Mammary epithelial cell (primary cell): ENCODE measurements at regions of chr3 and their contacts with region 1.

Region 1: GRCh38 chr3:100590114-100590839 is 19.1 kb upstream of the ADGRG7 start:
- DNase-seq: peak; percentile 59
- H3K4me3 ChIP-seq: no peak overlapping the region
- H3K27ac ChIP-seq: peak overlapping the region; percentile 2
- H3K4me1 ChIP-seq: no peaks in the 10 kb centered on the region
- H3K27me3 ChIP-seq: no peaks in the 10 kb centered on the region
- CTCF ChIP-seq: peak; percentile 85 to 86

Region 2: DNA sequence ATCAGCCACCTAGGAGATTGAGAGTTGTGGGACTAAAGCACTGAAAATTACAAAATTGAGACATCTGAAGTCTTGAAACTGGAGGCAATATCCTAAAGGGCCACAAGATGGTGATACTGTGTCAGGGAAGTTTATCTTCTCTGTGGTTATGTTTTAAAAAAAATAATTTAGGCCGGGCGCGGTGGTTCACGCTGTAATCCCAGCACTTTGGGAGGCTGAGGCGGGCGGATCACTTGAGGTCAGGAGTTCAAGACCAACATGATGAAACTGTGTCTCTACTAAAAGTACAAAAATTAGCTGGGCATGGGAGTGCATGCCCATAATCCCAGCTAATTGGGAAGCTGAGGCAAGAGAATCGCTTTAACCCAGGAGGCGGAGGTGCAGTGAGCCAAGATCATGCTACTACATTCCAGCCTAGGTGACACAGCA is 273.6 kb before region 1 on chr3:
- CTCF ChIA-PET with region 1: no interaction called
- dilution Hi-C with region 1: no loop called
- in situ Hi-C with region 1: no loop called
- intact Hi-C with region 1: loop called (anchors 1 kb)
- DNase-seq: peak; percentile 45
- H3K4me3 ChIP-seq: no peak overlapping the region
- H3K27ac ChIP-seq: no peak overlapping the region
- H3K4me1 ChIP-seq: no peaks in the 10 kb centered on the region
- H3K27me3 ChIP-seq: no peaks in the 10 kb centered on the region
- CTCF ChIP-seq: peak; percentile 62 to 67

Region 3: DNA sequence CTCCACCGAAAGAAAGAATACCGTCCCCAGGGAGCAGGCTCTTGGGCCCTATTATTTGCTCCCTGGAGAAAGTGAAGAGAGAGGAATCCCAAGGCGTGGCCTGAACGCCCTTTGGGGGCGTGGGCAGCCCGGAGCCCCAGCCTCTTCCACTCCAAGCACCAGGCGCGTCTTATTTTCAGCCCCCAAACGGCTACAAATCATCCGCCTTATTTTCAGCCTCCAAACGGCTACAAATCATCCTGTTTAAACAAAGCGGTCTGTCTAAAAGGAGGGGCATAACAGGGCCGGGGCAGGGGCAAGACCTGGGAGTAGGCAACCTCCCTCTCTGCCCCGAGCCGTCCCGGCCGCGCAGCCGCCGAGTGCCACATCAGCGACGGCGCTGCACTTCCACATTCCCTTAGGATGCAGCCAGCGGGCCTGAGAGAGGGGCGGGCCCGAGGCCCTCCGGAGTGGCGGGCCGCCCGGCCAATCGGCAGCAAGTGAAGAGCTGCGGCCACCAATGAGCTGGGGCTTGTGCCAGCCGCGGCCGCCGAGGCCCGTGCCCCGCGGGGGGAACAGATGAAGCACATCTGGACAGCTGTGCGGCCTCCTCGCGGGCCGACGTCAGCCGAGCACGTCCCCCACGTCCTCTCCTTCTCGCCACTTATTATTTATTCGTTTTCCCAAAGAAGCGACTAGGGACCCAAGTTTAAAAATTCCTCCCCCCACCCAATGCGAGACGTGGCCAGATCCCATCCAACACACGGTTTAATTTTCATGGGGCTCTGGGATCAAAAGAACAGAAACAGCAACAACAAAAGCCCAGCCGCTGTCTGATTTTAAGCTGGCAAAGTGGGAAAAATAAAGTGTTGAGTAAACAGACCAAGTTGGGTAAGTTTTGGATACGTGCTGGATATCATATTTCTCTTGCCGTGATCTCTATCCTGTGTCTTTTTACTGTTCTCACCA is 97.9 kb before region 1 on chr3 and contains the start of gene TMEM45A:
- CTCF ChIA-PET with region 1: no interaction called
- dilution Hi-C with region 1: no loop called
- in situ Hi-C with region 1: no loop called
- intact Hi-C with region 1: loop called (anchors 1 kb)
- DNase-seq: peak; percentile 94
- H3K4me3 ChIP-seq: peak within 1 kb of the TSS; percentile 57 to 96 (median 70)
- H3K27ac ChIP-seq: peak within 1 kb of the TSS; percentile 81
- H3K4me1 ChIP-seq: peaks cover 22% of the 10 kb centered on the region
- H3K27me3 ChIP-seq: no peaks in the 10 kb centered on the region
- CTCF ChIP-seq: no peak
- total RNA-seq, gene TMEM45A: 22.4 to 39.2 TPM

Region 4: DNA sequence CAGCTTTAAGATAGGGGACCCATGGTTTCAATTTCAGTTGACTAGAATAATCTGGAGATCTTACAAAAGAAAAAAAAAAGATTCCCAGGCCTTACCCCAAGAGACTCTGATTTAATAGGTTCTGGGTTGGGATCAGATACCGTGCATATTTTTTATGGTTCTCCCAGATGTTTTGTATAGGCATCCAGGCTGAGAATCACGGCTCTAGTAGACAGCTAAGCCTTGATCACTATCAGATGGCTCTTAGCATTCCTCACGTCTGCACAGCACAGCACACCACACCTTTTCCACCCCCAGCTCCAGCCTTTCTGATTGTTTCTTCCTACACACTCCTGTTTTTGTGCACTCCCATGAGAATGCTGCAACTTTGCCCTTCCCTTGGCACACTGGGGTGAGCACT is 57.1 kb before region 1 on chr3:
- CTCF ChIA-PET with region 1: interaction called, 4 read pairs
- dilution Hi-C with region 1: no loop called
- in situ Hi-C with region 1: no loop called
- intact Hi-C with region 1: loop called (anchors 5 kb)
- DNase-seq: no peak
- H3K4me3 ChIP-seq: no peak overlapping the region
- H3K27ac ChIP-seq: no peak overlapping the region
- H3K4me1 ChIP-seq: peaks cover 36% of the 10 kb centered on the region
- H3K27me3 ChIP-seq: no peaks in the 10 kb centered on the region
- CTCF ChIP-seq: no peak

Region 5: DNA sequence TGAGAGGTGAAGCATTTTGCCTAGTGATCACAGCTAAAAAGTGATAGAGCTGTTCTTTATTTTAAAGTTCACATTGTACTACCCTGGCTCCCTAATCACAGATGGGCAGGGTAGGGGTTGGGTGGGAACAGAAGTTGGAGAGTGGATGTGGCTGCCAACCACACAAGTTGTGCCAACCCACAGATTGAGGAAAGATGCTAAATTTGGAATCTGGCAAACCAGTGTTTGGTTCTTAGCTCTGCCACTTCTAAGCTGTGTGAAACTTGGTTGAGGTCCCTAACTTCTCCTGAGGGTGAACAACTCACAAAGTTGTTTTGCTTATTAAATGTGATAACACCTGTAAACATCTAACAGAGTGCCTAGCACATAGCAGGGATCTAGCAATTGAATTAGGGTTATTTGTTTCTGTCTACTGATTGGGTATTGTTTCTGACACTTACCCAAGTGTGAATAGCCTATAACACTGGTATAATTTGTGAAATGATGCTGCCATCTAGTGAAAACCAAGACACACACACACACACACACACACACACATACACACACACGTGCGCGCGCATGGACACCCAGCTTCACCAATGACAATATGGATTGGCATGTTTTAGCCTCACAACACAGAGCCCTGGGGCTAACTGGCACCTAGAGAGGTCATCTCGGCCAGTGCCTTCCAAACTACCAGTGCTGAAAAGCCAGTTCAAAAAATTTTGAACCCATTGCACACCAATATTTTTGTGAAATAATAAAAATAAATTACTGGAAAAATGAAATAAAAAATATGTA is 44.4 kb after region 1 on chr3:
- CTCF ChIA-PET with region 1: interaction called, 3 read pairs
- dilution Hi-C with region 1: no loop called
- in situ Hi-C with region 1: no loop called
- intact Hi-C with region 1: loop called (anchors 1 kb)
- DNase-seq: peak; percentile 78
- H3K4me3 ChIP-seq: no peak overlapping the region
- H3K27ac ChIP-seq: no peak overlapping the region
- H3K4me1 ChIP-seq: peaks cover 16% of the 10 kb centered on the region
- H3K27me3 ChIP-seq: no peaks in the 10 kb centered on the region
- CTCF ChIP-seq: peak; percentile 20 to 51

Region 6: GRCh38 chr3:100710261-100710968 is 120.1 kb after region 1 on chr3:
- CTCF ChIA-PET with region 1: no interaction called
- dilution Hi-C with region 1: no loop called
- in situ Hi-C with region 1: no loop called
- intact Hi-C with region 1: loop called (anchors 2 kb)
- DNase-seq: peak; percentile 75
- H3K4me3 ChIP-seq: peak overlapping the region; percentile 83 to 98 (median 93)
- H3K27ac ChIP-seq: peak overlapping the region; percentile 89
- H3K4me1 ChIP-seq: peaks cover 31% of the 10 kb centered on the region
- H3K27me3 ChIP-seq: no peaks in the 10 kb centered on the region
- CTCF ChIP-seq: peak; percentile 30 to 58